ENCODE measurements at regions of chr5 and their contacts with region 1.

Region 1: DNA sequence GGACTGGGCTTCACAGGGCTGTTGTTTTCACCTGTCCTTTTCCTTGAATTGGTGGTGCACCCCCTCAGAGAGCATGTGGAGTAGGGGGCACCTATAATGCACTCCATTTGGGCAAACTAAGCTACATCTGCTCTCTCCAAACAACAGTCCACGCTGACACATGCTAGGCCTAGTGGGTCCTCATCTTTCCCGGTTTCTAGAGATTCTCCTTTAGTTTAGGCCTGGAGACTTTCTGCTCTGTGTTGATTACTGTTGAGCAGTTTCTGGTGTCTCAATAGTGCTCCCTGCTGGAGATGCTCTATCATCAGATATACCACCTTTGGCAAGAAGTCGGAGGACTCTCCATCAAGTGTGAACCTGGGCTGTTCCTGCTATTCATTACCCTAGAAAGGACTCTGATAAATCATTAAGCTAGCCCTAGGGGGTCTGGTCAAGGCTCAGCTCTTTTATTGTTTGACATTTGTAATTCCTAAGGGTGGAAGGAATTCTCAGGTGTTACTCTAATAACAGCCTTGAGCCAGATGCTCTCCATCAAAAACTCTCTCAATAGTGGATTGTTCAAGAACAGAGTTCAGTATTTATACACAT is 64.0 kb upstream of the FYB1 start:
- DNase-seq: peak in 8 of 9 experiments; percentile 40 to 90 (median 64)
- ATAC-seq: peak; percentile 100
- H3K4me3 ChIP-seq: no peak overlapping the region
- H3K4me3 Mint-ChIP-seq: no peak overlapping the region
- H3K27ac ChIP-seq: no peak overlapping the region
- H3K27ac Mint-ChIP-seq: peak overlapping the region; percentile 73
- H3K4me1 ChIP-seq: peaks cover 8% of the 10 kb centered on the region
- H3K4me1 Mint-ChIP-seq: peaks cover 30% of the 10 kb centered on the region
- H3K27me3 ChIP-seq: no peaks in the 10 kb centered on the region
- H3K27me3 Mint-ChIP-seq: peaks cover 3% of the 10 kb centered on the region
- CTCF ChIP-seq: peak; percentile 82

Region 2: DNA sequence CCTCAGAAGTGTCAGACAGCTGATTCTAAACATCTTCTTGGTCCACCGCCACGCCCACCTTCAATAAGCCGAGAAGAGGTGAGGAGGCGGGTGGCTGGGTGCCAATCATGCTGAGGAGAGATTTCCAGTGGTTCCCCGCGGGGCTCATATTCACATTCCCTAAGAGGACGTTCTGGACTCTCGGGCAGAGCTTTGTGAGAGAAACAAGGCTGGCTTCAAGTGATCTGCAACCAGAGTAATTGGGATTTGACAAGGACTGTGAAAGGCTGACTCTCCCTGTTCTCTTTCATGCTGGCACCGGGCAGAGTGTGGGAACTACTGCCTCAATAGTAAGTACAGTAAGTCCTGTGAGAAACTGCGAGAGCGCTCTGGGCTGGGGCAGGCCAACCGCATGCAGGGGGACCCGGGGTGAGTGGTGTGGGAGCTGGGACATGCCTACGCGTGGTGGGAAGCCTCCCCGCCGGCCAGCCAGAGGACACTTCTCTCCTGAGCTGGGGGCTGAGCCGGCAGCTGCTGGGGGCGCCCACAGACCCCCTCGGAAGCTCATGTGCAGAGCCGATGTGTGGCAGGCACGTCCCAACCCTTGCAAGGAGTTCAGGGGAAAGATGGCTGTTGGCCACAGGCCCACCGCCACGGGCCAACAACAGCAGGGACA is 837.8 kb before region 1 on chr5:
- CTCF ChIA-PET with region 1: no interaction called
- POLR2A ChIA-PET with region 1: no interaction called
- intact Hi-C with region 1: no loop called
- DNase-seq: no peak
- ATAC-seq: no peak
- H3K4me3 ChIP-seq: no peak overlapping the region
- H3K4me3 Mint-ChIP-seq: no peak overlapping the region
- H3K27ac ChIP-seq: no peak overlapping the region
- H3K27ac Mint-ChIP-seq: no peak overlapping the region
- H3K4me1 ChIP-seq: no peaks in the 10 kb centered on the region
- H3K4me1 Mint-ChIP-seq: peaks cover 2% of the 10 kb centered on the region
- H3K27me3 ChIP-seq: peaks cover 3 to 9% of the 10 kb centered on the region in 2 experiments
- H3K27me3 Mint-ChIP-seq: peaks cover 52% of the 10 kb centered on the region
- CTCF ChIP-seq: no peak

Region 3: GRCh38 chr5:39117401-39117800 is 165.9 kb before region 1 on chr5:
- CTCF ChIA-PET with region 1: interaction called, 10 read pairs
- POLR2A ChIA-PET with region 1: no interaction called
- intact Hi-C with region 1: no loop called
- DNase-seq: no peak
- ATAC-seq: no peak
- H3K4me3 ChIP-seq: no peak overlapping the region
- H3K4me3 Mint-ChIP-seq: no peak overlapping the region
- H3K27ac ChIP-seq: no peak overlapping the region
- H3K27ac Mint-ChIP-seq: peak overlapping the region; percentile 90
- H3K4me1 ChIP-seq: no peaks in the 10 kb centered on the region
- H3K4me1 Mint-ChIP-seq: peaks cover 21% of the 10 kb centered on the region
- H3K27me3 ChIP-seq: no peaks in the 10 kb centered on the region
- H3K27me3 Mint-ChIP-seq: no peaks in the 10 kb centered on the region
- CTCF ChIP-seq: no peak

Region 4: DNA sequence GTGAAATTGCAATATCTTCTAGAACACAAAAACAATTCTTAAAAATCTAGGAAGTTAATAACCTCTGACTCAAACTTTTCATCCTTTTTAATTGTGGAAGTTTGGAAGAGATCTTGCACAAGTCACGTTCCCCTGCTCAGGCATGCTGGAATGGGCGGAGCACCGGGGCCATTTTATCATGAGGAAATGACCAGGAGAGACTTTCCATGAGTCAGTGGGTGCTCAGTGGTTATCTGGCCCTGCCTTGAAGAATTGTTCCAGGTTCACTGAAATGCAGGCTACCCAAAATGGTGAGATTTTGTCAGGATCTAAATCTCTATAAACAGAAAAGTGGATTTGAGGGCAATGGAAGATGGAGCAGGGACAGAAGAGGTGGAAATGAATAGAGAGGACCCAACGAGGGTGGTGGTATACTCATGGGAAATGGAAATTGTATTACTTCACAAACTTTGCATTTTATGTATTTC is 125.2 kb before region 1 on chr5:
- CTCF ChIA-PET with region 1: interaction called, 29 read pairs
- POLR2A ChIA-PET with region 1: interaction called, 3 read pairs
- intact Hi-C with region 1: no loop called
- DNase-seq: no peak
- ATAC-seq: no peak
- H3K4me3 ChIP-seq: no peak overlapping the region
- H3K4me3 Mint-ChIP-seq: peak overlapping the region; percentile 16
- H3K27ac ChIP-seq: no peak overlapping the region
- H3K27ac Mint-ChIP-seq: peak overlapping the region; percentile 86
- H3K4me1 ChIP-seq: peaks cover 83% of the 10 kb centered on the region
- H3K4me1 Mint-ChIP-seq: peaks cover 86% of the 10 kb centered on the region
- H3K27me3 ChIP-seq: no peaks in the 10 kb centered on the region
- H3K27me3 Mint-ChIP-seq: no peaks in the 10 kb centered on the region
- CTCF ChIP-seq: no peak

Region 5: DNA sequence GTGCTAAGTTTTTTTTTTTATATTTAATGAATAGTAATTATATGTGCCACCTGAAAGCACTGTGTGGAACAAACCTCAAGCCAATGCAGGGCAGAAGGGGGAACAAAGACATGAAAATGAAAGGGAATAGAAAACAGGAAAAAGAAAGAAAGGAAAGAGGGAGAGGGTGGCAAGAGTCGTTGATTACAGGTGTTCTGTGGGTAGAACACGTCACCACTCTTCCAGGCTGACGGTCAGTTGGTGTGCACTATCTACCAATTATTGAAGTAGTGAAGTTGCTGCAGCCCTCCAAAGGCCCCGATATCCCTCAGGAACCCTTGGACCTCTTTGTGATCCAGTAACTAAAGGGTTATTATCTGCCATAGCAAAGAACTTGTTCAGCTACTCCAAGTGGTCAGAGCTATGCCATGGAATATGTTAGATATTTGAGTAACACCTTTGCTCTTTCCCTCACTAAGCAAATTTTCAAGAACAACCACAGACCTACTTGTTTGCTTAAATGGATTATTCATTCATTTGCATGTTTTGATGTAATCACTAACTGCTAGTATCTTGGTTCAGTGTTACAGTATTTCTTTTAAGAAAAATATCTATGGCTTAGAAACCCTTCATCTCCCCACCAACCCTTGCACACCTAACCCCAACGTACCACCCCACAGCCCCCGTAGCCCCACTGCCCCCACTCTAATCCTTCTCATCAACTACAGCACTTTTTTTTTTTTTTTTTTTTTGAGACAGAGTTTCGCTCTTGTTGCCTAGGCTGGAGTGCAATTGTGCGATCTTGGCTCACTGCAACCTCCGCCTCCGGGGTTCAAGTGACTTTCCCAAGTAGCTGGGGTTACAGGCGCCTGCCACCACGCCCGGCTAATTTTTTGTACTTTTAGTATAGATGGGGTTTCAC is 95.2 kb before region 1 on chr5:
- CTCF ChIA-PET with region 1: interaction called, 29 read pairs
- POLR2A ChIA-PET with region 1: no interaction called
- intact Hi-C with region 1: no loop called
- DNase-seq: peak in 4 of 9 experiments; percentile 47 to 66 (median 56)
- ATAC-seq: peak; percentile 53
- H3K4me3 ChIP-seq: peak overlapping the region; percentile 6 to 29
- H3K4me3 Mint-ChIP-seq: peak overlapping the region; percentile 75
- H3K27ac ChIP-seq: peak overlapping the region; percentile 51 to 88
- H3K27ac Mint-ChIP-seq: peak overlapping the region; percentile 98
- H3K4me1 ChIP-seq: peaks cover 90% of the 10 kb centered on the region
- H3K4me1 Mint-ChIP-seq: peaks cover 90% of the 10 kb centered on the region
- H3K27me3 ChIP-seq: no peaks in the 10 kb centered on the region
- H3K27me3 Mint-ChIP-seq: no peaks in the 10 kb centered on the region
- CTCF ChIP-seq: no peak

Region 6: GRCh38 chr5:39209924-39210323 is 73.4 kb before region 1 on chr5:
- CTCF ChIA-PET with region 1: interaction called, 22 read pairs
- POLR2A ChIA-PET with region 1: no interaction called
- intact Hi-C with region 1: no loop called
- DNase-seq: peak; percentile 61 to 94 (median 83)
- ATAC-seq: peak; percentile 76
- H3K4me3 ChIP-seq: peak overlapping the region; percentile 12 to 49
- H3K4me3 Mint-ChIP-seq: peak overlapping the region; percentile 68
- H3K27ac ChIP-seq: peak overlapping the region; percentile 65 to 88
- H3K27ac Mint-ChIP-seq: peak overlapping the region; percentile 96
- H3K4me1 ChIP-seq: peaks cover 97% of the 10 kb centered on the region
- H3K4me1 Mint-ChIP-seq: peaks cover 95% of the 10 kb centered on the region
- H3K27me3 ChIP-seq: no peaks in the 10 kb centered on the region
- H3K27me3 Mint-ChIP-seq: no peaks in the 10 kb centered on the region
- CTCF ChIP-seq: no peak

Region 7: GRCh38 chr5:39266442-39266841 is 16.9 kb before region 1 on chr5:
- CTCF ChIA-PET with region 1: interaction called, 22 read pairs
- POLR2A ChIA-PET with region 1: no interaction called
- intact Hi-C with region 1: no loop called
- DNase-seq: no peak
- ATAC-seq: no peak
- H3K4me3 ChIP-seq: no peak overlapping the region
- H3K4me3 Mint-ChIP-seq: no peak overlapping the region
- H3K27ac ChIP-seq: peak overlapping the region in 1 of 2 experiments; percentile 43
- H3K27ac Mint-ChIP-seq: no peak overlapping the region
- H3K4me1 ChIP-seq: peaks cover 5% of the 10 kb centered on the region
- H3K4me1 Mint-ChIP-seq: peaks cover 42% of the 10 kb centered on the region
- H3K27me3 ChIP-seq: no peaks in the 10 kb centered on the region
- H3K27me3 Mint-ChIP-seq: no peaks in the 10 kb centered on the region
- CTCF ChIP-seq: no peak

Region 8: GRCh38 chr5:39369123-39369815 is 85.9 kb after region 1 on chr5:
- CTCF ChIA-PET with region 1: no interaction called
- POLR2A ChIA-PET with region 1: no interaction called
- intact Hi-C with region 1: no loop called
- DNase-seq: no peak
- ATAC-seq: no peak
- H3K4me3 ChIP-seq: no peak overlapping the region
- H3K4me3 Mint-ChIP-seq: no peak overlapping the region
- H3K27ac ChIP-seq: no peak overlapping the region
- H3K27ac Mint-ChIP-seq: no peak overlapping the region
- H3K4me1 ChIP-seq: no peaks in the 10 kb centered on the region
- H3K4me1 Mint-ChIP-seq: peaks cover 9% of the 10 kb centered on the region
- H3K27me3 ChIP-seq: no peaks in the 10 kb centered on the region
- H3K27me3 Mint-ChIP-seq: peaks cover 2% of the 10 kb centered on the region
- CTCF ChIP-seq: no peak